Activated CD4-positive, alpha-beta T cell treated with anti-CD3 and anti-CD28 coated beads for 36 hours (primary cell): ENCODE measurements at regions of chr13 and their contacts with region 1.

Region 1: DNA sequence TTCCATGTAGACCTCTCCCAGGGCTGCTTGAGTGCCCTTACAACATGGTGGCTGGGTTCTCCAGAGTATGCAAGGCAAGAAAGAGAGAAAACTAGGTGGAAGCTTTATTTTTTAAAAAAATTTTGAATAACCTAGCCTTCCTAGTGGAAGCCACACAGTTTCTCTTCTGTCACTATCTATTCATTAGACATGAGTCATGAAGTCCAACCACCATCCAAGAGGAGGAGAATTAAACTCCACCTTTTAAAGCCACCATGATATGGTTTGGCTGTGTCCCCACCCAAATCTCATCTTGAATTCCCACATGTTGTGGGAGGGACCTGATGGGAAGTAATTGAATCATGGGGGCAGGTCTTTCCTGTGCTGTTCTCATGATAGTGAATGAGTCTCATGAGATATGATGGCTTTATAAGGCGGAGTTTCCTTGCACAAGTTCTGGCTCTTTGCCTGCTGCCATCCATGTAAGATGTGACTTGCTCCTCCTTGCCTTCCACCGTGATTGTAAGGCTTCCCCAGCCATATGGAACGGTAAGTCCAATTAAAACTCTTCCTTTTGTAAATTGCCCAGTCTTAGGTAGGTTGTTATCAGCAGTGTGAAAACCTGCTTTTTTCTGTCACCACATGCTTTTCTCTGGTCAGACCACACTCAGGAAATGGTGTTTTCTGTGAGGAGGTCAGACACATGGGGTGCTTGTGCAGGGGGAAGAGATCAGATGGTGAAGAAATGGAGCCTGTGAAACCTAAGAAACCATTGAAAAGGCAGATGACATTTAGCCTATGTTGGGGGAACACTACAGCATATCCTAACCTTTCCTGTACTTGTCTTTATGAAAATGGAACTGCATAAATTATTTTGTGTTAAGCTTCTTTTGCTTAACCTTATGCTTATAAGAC is 57.7 kb downstream of the ANKRD10 start:
- DNase-seq: no peak
- ATAC-seq: peak; percentile 39
- H3K4me3 Mint-ChIP-seq: no peak overlapping the region
- H3K27ac Mint-ChIP-seq: no peak overlapping the region
- H3K4me1 Mint-ChIP-seq: peaks cover 4% of the 10 kb centered on the region
- H3K27me3 Mint-ChIP-seq: no peaks in the 10 kb centered on the region

Region 2: DNA sequence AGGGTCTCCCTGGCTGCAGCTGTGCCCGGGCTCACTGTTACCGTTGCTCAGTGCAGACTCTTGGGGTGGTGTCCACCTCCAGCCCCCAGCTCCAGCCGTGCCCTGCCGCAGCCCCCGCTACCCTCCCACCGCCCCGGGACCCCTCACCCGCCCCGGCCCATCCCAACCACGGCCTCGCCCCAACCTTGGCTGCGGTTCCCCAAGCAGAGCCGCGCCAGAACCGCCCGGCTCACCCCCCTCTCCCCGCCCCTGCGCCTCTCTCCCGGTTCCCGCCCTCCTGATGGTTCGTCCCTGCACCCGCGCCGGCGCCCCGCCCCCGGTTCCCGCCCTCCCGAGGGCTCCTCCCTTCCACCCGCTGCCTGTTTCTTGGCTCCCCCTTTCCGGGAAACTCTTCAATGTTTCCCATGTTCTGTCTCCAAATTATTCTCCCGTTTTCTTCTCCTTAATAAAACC is 17.3 kb after region 1 on chr13:
- CTCF ChIA-PET with region 1: no interaction called
- POLR2A ChIA-PET with region 1: interaction called, 13 read pairs
- intact Hi-C with region 1: no loop called
- DNase-seq: peak; percentile 64
- ATAC-seq: peak; percentile 55
- H3K4me3 Mint-ChIP-seq: peak overlapping the region; percentile 40
- H3K27ac Mint-ChIP-seq: no peak overlapping the region
- H3K4me1 Mint-ChIP-seq: peaks cover 10% of the 10 kb centered on the region
- H3K27me3 Mint-ChIP-seq: peaks cover 19% of the 10 kb centered on the region